A549 (cell line): ENCODE measurements at regions of chr14 and their contacts with region 1.

Region 1: DNA sequence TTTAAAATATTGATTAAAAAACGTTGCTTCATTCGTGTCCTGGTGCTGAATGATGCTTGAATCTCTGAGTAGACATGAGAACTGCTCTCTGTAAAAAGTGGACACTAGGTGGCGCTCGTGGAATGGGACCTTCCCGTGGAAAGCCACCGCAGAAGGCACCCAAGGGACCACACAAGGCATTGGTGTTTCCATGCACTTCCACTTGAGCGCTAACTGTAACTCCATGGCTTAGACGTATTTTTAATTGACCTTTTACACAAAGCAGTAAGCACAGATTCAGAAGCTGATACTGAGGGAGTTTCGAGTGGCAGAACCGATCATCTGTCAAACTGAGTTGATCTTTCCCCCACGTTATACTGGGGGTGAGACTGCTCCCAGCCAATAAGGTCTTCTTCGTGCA is 135.3 kb downstream of the PRKCH start:
- DNase-seq: peak; percentile 76 to 86
- ATAC-seq: peak; percentile 87 to 93
- H3K4me3 ChIP-seq: no peak overlapping the region
- H3K27ac ChIP-seq: no peak overlapping the region
- H3K4me1 ChIP-seq: peaks cover 9% of the 10 kb centered on the region
- CTCF ChIP-seq: peak; percentile 94
- EP300 ChIP-seq: no peak
- POLR2A ChIP-seq: no peak
- RAD21 ChIP-seq: peak; percentile 90 to 93

Region 2: GRCh38 chr14:61188978-61189808 is 267.5 kb before region 1 on chr14:
- CTCF ChIA-PET with region 1: no interaction called
- POLR2A ChIA-PET with region 1: no interaction called
- DNase-seq: peak; percentile 74 to 87
- ATAC-seq: peak; percentile 92 to 95
- H3K4me3 ChIP-seq: peak overlapping the region; percentile 61
- H3K27ac ChIP-seq: peak overlapping the region; percentile 88 to 95
- H3K4me1 ChIP-seq: peaks cover 26% of the 10 kb centered on the region
- CTCF ChIP-seq: peak; percentile 76
- EP300 ChIP-seq: no peak
- POLR2A ChIP-seq: no peak
- RAD21 ChIP-seq: peak; percentile 71 to 87

Region 3: GRCh38 chr14:61229475-61229888 is 227.2 kb before region 1 on chr14:
- CTCF ChIA-PET with region 1: no interaction called
- POLR2A ChIA-PET with region 1: no interaction called
- DNase-seq: no peak
- ATAC-seq: no peak
- H3K4me3 ChIP-seq: no peak overlapping the region
- H3K27ac ChIP-seq: no peak overlapping the region
- H3K4me1 ChIP-seq: peaks cover 5% of the 10 kb centered on the region; the same call in 1 of the 3 replicates
- CTCF ChIP-seq: no peak
- EP300 ChIP-seq: no peak
- POLR2A ChIP-seq: no peak
- RAD21 ChIP-seq: no peak

Region 4: GRCh38 chr14:61438860-61439684 is 17.6 kb before region 1 on chr14:
- CTCF ChIA-PET with region 1: interaction called, 15 read pairs
- POLR2A ChIA-PET with region 1: no interaction called
- DNase-seq: peak; percentile 74 to 76
- ATAC-seq: peak; percentile 91 to 94
- H3K4me3 ChIP-seq: peak overlapping the region; percentile 7; the same call in 2 of the 3 replicates
- H3K27ac ChIP-seq: peak overlapping the region; percentile 71 to 88
- H3K4me1 ChIP-seq: peaks cover 50% of the 10 kb centered on the region
- CTCF ChIP-seq: no peak
- EP300 ChIP-seq: peak; percentile 78 to 94; a peak in 3 of 5 replicates
- POLR2A ChIP-seq: no peak
- RAD21 ChIP-seq: no peak; a peak in 1 of 5 replicates

Region 5: GRCh38 chr14:62126879-62127478 is 670.3 kb after region 1 on chr14:
- CTCF ChIA-PET with region 1: interaction called, 24 read pairs
- POLR2A ChIA-PET with region 1: no interaction called
- DNase-seq: peak; percentile 31 to 58
- ATAC-seq: peak; percentile 75 to 91; a peak in 3 of 6 replicates
- H3K4me3 ChIP-seq: no peak overlapping the region
- H3K27ac ChIP-seq: no peak overlapping the region
- H3K4me1 ChIP-seq: no peaks in the 10 kb centered on the region
- CTCF ChIP-seq: peak; percentile 81
- EP300 ChIP-seq: no peak
- POLR2A ChIP-seq: no peak
- RAD21 ChIP-seq: peak; percentile 88